K562 (cell line): ENCODE measurements at regions of chr1 and their contacts with region 1.

Region 1: DNA sequence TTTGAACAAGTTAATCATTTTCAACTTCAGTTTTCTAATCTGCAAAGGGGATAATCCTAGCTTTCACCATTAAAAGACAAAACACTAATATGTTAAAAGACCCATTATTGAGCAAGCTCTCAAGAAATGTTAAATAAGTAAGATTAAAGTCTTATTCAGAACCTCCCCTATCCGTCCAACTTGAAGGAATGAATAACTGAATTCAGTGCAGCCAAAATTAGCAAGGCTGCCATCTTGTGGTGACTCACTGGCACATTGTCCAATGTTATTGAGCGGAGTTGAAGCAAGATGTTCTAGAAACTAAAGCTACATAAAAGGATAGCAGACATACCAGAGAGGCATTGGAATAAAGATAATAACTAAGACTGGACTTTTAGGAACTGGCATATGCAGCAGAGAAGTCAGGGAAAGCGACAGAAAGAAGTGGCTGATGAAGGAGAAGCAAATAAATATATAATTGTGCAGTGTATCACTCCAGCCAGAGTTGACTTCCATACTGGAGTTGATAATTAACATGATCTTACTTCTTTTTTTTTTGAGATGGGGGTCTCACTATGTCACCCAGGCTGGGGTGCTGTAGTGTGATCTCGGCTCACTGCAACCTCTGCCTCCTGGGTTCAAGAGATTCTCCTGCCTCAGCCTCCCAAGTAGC is 8.2 kb upstream of the CAP1 start:
- DNase-seq: peak; percentile 59 to 77 (median 69)
- ATAC-seq: peak; percentile 77
- H3K4me3 ChIP-seq: no peak overlapping the region
- H3K27ac ChIP-seq: no peak overlapping the region
- H3K4me1 ChIP-seq: peaks cover 10 to 41% of the 10 kb centered on the region in 2 experiments
- H3K27me3 ChIP-seq: no peaks in the 10 kb centered on the region
- CTCF ChIP-seq: peak; percentile 71 to 89 (median 80)
- EP300 ChIP-seq: 0 out of 2 replicates have a peak, but pooled peaks have one; percentile 6
- POLR2A ChIP-seq: no peak
- RAD21 ChIP-seq: peak; percentile 81 to 84

Region 2: DNA sequence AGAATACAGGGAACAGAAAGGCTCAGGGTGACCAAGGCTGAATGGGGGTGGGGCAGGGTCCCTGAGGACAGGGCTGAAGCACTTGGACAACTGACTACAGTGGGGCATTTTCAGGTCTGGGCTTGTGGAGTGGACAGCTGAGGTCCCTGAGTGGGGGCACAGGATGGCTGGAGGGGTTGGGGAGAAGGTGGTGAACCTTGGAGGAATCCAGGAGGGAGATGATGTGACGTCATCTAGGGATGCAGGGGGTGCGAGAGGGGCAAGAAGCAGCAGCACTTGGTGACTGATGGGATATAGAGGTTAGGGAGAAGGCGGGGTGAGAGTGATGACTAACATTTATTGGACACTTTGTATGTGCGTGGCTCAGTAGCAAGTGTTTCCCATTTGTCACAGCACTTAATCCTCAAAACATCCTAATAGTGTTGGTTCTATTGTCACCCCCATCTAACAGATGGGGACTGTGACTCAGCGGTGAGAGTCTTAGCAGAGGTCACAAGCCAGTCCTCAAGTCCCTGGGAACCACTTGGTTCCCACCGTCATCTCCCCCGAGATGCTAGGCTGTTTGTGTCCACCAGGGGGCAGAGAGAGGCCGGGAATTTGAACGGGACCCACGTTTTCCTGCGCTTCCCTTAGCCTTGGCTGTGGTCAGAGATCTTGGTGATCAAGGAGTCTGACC is 215.8 kb before region 1 on chr1:
- CTCF ChIA-PET with region 1: no interaction called
- POLR2A ChIA-PET with region 1: no interaction called
- in situ Hi-C with region 1: no loop called
- intact Hi-C with region 1: loop called (anchors 5 kb)
- DNase-seq: peak; percentile 84 to 88 (median 86)
- ATAC-seq: peak; percentile 92
- H3K4me3 ChIP-seq: no peak overlapping the region
- H3K27ac ChIP-seq: no peak overlapping the region
- H3K4me1 ChIP-seq: peaks cover 9 to 11% of the 10 kb centered on the region in 2 experiments; a peak in 4 of 5 replicates
- H3K27me3 ChIP-seq: peaks cover 2 to 8% of the 10 kb centered on the region in 2 experiments; a peak in 2 of 5 replicates
- CTCF ChIP-seq: peak; percentile 87 to 94 (median 91)
- EP300 ChIP-seq: no peak
- POLR2A ChIP-seq: no peak
- RAD21 ChIP-seq: peak; percentile 95 to 99

Region 3: GRCh38 chr1:39919545-39919944 is 112.8 kb before region 1 on chr1:
- CTCF ChIA-PET with region 1: interaction called, 9 read pairs
- POLR2A ChIA-PET with region 1: interaction called, 4 read pairs
- in situ Hi-C with region 1: loop called (anchors 5 kb)
- intact Hi-C with region 1: loop called (anchors 1 kb)
- DNase-seq: peak; percentile 85 to 87 (median 86)
- ATAC-seq: peak; percentile 98
- H3K4me3 ChIP-seq: no peak overlapping the region
- H3K27ac ChIP-seq: no peak overlapping the region
- H3K4me1 ChIP-seq: peaks cover 0 to 5% of the 10 kb centered on the region in 2 experiments; a peak in 4 of 5 replicates
- H3K27me3 ChIP-seq: peaks cover 20 to 32% of the 10 kb centered on the region in 2 experiments; a peak in 4 of 5 replicates
- CTCF ChIP-seq: peak; percentile 86 to 93 (median 90)
- EP300 ChIP-seq: no peak
- POLR2A ChIP-seq: no peak
- RAD21 ChIP-seq: peak; percentile 93 to 94

Region 4: GRCh38 chr1:39973503-39974135 is 58.7 kb before region 1 on chr1:
- CTCF ChIA-PET with region 1: no interaction called
- POLR2A ChIA-PET with region 1: no interaction called
- in situ Hi-C with region 1: no loop called
- intact Hi-C with region 1: loop called (anchors 1 kb)
- DNase-seq: peak; percentile 74 to 87 (median 82)
- ATAC-seq: peak; percentile 86
- H3K4me3 ChIP-seq: no peak overlapping the region
- H3K27ac ChIP-seq: no peak overlapping the region
- H3K4me1 ChIP-seq: peaks cover 4% of the 10 kb centered on the region in 2 experiments; a peak in 4 of 5 replicates
- H3K27me3 ChIP-seq: peaks cover 4 to 8% of the 10 kb centered on the region in 2 experiments; a peak in 2 of 5 replicates
- CTCF ChIP-seq: peak; percentile 96 to 99 (median 98)
- EP300 ChIP-seq: no peak
- POLR2A ChIP-seq: no peak
- RAD21 ChIP-seq: peak; percentile 97 to 99

Region 5: DNA sequence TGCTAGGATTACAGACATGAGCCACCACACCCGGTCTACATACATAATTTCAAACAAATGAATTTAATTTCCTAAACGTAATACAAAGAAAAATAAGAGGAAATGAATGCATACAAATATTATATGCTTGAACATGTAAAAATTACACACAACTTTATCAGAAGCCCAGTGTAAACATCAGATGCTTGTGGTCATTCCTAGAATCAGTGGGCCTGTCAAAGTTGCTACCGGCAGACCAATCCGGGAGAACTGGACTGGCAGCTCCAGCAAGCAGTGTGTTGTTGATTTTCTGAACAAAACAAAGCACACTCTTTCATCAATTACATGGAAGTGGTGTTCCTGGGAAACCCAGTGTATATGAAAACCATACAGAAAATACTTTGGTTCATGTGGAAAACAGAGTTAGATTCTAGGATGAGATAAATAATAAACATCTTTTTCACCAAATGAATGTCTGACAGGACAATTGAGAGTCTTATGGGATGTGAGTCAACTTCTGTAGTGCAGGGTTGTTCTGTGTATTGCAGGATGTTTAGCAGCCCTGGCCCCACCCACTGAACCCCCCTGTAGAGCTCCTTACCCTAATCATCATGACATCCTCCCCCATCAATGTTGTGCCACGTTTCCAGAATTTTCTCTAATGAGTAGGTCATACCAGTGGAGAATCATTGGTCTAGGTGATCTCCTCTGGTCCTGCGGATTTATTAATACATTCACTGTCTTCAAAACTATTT is 43.6 kb before region 1 on chr1:
- CTCF ChIA-PET with region 1: no interaction called
- POLR2A ChIA-PET with region 1: no interaction called
- in situ Hi-C with region 1: no loop called
- intact Hi-C with region 1: loop called (anchors 5 kb)
- DNase-seq: no peak
- ATAC-seq: no peak
- H3K4me3 ChIP-seq: no peak overlapping the region
- H3K27ac ChIP-seq: no peak overlapping the region
- H3K4me1 ChIP-seq: no peaks in the 10 kb centered on the region
- H3K27me3 ChIP-seq: no peaks in the 10 kb centered on the region
- CTCF ChIP-seq: no peak
- EP300 ChIP-seq: no peak
- POLR2A ChIP-seq: no peak
- RAD21 ChIP-seq: no peak

Region 6: GRCh38 chr1:40020447-40021085 is 11.8 kb before region 1 on chr1:
- CTCF ChIA-PET with region 1: no interaction called
- POLR2A ChIA-PET with region 1: interaction called, 12 read pairs
- in situ Hi-C with region 1: no loop called
- intact Hi-C with region 1: no loop called
- DNase-seq: no peak
- ATAC-seq: no peak
- H3K4me3 ChIP-seq: no peak overlapping the region
- H3K27ac ChIP-seq: no peak overlapping the region
- H3K4me1 ChIP-seq: no peaks in the 10 kb centered on the region
- H3K27me3 ChIP-seq: no peaks in the 10 kb centered on the region; a peak in 1 of 5 replicates
- CTCF ChIP-seq: no peak
- EP300 ChIP-seq: no peak
- POLR2A ChIP-seq: no peak
- RAD21 ChIP-seq: no peak